Psoas muscle (tissue), 8 donors: ENCODE measurements at regions of chr17 and their contacts with region 1.

Region 1: DNA sequence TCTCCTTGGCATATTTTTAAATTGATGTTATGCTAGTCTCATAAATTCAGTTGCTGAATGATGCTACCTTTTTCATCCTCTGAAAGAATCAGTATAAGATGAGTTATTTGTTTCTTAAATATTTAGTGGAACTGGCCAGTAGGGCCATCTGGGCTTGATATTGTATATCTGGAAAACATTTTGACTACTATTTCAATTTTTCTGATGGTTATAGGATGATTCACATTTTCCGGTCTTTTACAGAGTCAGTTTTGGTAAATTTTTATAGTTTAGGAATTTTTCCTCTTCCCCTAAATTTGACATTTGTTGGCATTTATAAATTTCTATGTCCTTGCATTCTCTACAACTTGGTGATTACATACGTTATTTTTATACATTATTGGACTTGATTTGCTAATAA is 296.3 kb upstream of the AXIN2 start:
- DNase-seq: no peak
- ATAC-seq: no peak
- H3K4me3 ChIP-seq: no peak overlapping the region
- H3K27ac ChIP-seq: no peak overlapping the region
- H3K4me1 ChIP-seq: no peaks in the 10 kb centered on the region
- H3K27me3 ChIP-seq: no peaks in the 10 kb centered on the region
- CTCF ChIP-seq: no peak

Region 2: GRCh38 chr17:65888649-65889048 is 30.9 kb after region 1 on chr17:
- intact Hi-C with region 1: loop called in 1 of 2 experiments (anchors 2 kb)
- DNase-seq: no peak
- ATAC-seq: no peak
- H3K4me3 ChIP-seq: no peak overlapping the region
- H3K27ac ChIP-seq: no peak overlapping the region
- H3K4me1 ChIP-seq: no peaks in the 10 kb centered on the region
- H3K27me3 ChIP-seq: no peaks in the 10 kb centered on the region
- CTCF ChIP-seq: no peak